GM12878 (cell line): ENCODE measurements at regions of chr2 and their contacts with region 1.

Region 1: DNA sequence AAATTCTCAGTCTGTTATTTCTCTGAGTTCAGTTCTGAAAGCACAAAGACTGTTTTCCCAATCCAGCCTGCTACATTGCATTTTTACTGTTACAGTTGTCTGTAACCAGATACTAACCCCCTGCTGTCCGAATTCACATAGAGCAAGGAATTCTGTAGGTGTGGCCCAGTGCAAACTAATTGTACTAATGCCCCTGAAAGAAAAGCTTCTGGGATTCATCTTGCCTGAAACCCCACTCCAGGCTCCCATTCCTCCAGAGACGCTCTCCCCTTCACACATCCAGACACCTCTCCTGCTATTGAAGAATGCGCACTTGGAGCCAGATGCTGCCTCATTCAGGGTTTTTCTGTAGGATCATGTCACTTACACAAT is 127.0 kb downstream of the TTC32 start:
- DNase-seq: no peak
- ATAC-seq: no peak
- H3K4me3 ChIP-seq: no peak overlapping the region
- H3K27ac ChIP-seq: no peak overlapping the region
- H3K4me1 ChIP-seq: no peaks in the 10 kb centered on the region
- H3K27me3 ChIP-seq: no peaks in the 10 kb centered on the region; a peak in 1 of 4 replicates
- CTCF ChIP-seq: no peak
- EP300 ChIP-seq: no peak
- POLR2A ChIP-seq: no peak
- RAD21 ChIP-seq: no peak

Region 2: DNA sequence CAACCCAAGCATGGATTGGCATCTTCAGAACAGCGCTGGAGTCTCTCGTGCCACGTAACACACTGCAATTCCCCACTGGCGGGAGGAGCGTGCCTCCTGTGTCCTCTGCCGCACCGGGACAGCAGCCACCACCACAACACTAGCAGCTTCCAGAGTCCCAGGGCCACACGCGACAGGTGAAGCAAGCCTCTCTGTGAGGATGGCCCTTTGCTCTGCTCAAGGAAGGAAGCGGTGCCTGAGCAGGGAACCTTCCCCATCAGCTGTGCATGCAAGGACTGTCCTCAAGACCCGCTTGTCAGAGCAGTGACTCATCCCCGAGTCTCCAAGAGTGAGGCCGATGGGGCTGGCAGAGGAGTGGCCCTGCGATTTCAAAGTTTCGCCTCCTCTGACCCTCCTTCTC is 83.0 kb after region 1 on chr2:
- CTCF ChIA-PET with region 1: interaction called, 4 read pairs
- POLR2A ChIA-PET with region 1: no interaction called
- RAD21 ChIA-PET with region 1: no interaction called
- SMC1A ChIA-PET with region 1: no interaction called
- in situ Hi-C with region 1: no loop called
- intact Hi-C with region 1: loop called (anchors 2 kb)
- DNase-seq: no peak
- ATAC-seq: no peak
- H3K4me3 ChIP-seq: no peak overlapping the region
- H3K27ac ChIP-seq: no peak overlapping the region
- H3K4me1 ChIP-seq: no peaks in the 10 kb centered on the region
- H3K27me3 ChIP-seq: no peaks in the 10 kb centered on the region; a peak in 2 of 4 replicates
- CTCF ChIP-seq: no peak
- EP300 ChIP-seq: no peak
- POLR2A ChIP-seq: no peak
- RAD21 ChIP-seq: no peak

Region 3: DNA sequence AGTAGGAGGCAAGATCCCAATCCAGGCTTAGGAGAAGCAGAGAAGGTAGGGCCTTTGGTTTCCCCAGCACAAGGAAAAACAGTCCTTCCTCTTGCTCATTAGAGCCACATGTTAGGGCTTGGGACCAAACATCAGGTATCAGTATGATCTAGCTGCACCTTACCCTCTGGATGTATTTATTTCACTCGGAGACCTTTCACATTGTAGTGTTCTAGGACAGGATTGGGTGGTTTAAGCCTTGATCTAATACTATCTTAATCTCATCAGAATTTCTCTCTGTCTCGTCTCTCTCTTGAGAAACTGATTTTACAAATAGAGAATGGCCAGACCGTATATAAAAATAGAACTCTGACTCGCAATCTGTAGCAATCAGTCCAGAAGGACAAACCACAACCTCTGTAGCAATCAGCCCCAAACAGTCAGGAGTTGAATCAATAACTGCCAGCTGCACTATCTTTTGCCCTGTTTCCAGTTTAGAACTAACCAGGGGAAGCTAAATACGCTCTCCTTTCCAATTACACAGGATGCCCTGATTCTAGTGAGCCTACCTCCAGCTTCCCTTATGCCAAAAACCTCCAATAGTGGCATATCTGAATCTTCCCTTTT is 1556.1 kb after region 1 on chr2:
- CTCF ChIA-PET with region 1: no interaction called
- POLR2A ChIA-PET with region 1: no interaction called
- RAD21 ChIA-PET with region 1: no interaction called
- SMC1A ChIA-PET with region 1: no interaction called
- in situ Hi-C with region 1: no loop called
- intact Hi-C with region 1: no loop called
- DNase-seq: no peak
- ATAC-seq: no peak
- H3K4me3 ChIP-seq: no peak overlapping the region
- H3K27ac ChIP-seq: no peak overlapping the region
- H3K4me1 ChIP-seq: no peaks in the 10 kb centered on the region
- H3K27me3 ChIP-seq: no peaks in the 10 kb centered on the region
- CTCF ChIP-seq: no peak
- EP300 ChIP-seq: no peak
- POLR2A ChIP-seq: no peak
- RAD21 ChIP-seq: no peak